Heart left ventricle (tissue), 16 donors: ENCODE measurements at regions of chr5 and their contacts with region 1.

Region 1: DNA sequence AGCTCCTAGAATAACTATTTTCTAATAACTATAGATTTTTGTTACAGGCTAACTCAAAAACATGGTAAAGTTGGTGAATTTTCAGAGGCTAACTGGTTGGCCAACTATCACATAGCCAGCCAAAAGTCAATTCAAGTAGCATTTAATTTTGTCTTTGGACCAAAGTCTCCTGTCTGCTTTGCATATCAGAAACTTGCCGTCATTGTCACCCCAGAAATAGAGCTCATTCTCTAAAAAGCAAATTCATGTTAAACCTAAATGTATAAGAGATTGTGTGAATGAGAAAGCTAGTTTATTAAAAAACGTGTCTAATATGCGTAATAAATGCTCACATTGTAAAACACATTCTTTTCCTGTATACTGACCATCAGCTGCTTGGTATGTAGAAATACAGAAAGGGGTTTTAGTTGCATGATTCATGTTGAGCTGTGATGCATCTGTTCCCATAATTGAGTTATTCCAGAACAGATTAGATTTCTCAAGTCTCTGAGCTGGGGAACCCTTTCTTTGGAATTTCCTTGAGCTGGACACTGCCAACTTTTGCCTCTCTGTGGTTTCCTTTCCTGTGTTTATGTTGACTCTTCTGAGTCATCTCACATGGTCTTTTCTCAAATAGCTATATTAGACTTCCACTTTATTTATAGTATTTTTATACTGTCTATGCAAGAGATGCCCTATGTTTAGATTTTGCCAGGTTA is 7.3 kb downstream of the SRFBP1 start:
- DNase-seq: no peak
- ATAC-seq: peak in 3 of 4 donors; percentile 64 to 96 (median 75)
- H3K4me3 ChIP-seq: no peak overlapping the region
- H3K27ac ChIP-seq: peak overlapping the region in 2 of 12 donors; percentile 35 to 79
- H3K4me1 ChIP-seq: peaks cover 0 to 34% (median 18%) of the 10 kb centered on the region in 12 donors
- H3K27me3 ChIP-seq: no peaks in the 10 kb centered on the region
- CTCF ChIP-seq: no peak
- POLR2A ChIP-seq: no peak

Region 2: DNA sequence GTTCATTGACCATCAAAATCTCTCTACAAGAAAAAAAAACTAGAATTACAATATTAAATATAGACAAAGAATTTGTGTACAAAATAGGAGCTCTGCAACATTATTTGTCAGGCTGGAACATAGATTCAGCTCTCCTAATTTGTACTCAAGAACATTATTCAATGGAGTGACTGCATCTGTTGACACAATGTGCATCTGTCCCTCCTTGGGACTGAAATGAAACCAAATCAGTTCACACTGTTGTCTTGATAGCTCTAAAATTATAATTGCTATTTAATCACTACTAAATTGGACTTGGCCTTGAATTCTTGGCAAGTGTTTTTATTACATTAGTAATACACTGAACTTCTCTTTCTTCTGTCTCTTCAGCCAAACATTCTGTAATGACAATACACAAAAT is 69.7 kb before region 1 on chr5:
- intact Hi-C with region 1: no loop called
- DNase-seq: no peak
- ATAC-seq: no peak
- H3K4me3 ChIP-seq: no peak overlapping the region
- H3K27ac ChIP-seq: no peak overlapping the region
- H3K4me1 ChIP-seq: no peaks in the 10 kb centered on the region
- H3K27me3 ChIP-seq: peaks cover 0 to 4% (median 0%) of the 10 kb centered on the region in 9 donors
- CTCF ChIP-seq: no peak
- POLR2A ChIP-seq: no peak

Region 3: GRCh38 chr5:122007546-122007945 is 38.5 kb after region 1 on chr5:
- intact Hi-C with region 1: no loop called
- DNase-seq: peak in 1 of 5 donors; percentile 37
- ATAC-seq: peak in 1 of 4 donors; percentile 31
- H3K4me3 ChIP-seq: no peak overlapping the region
- H3K27ac ChIP-seq: no peak overlapping the region
- H3K4me1 ChIP-seq: no peaks in the 10 kb centered on the region
- H3K27me3 ChIP-seq: no peaks in the 10 kb centered on the region
- CTCF ChIP-seq: no peak
- POLR2A ChIP-seq: no peak

Region 4: GRCh38 chr5:122076664-122077365 is 107.8 kb after region 1 on chr5:
- intact Hi-C with region 1: loop called in 6 of 10 experiments (anchors 2 to 10 kb)
- DNase-seq: peak; percentile 52 to 75 (median 73)
- ATAC-seq: peak; percentile 29 to 76 (median 74)
- H3K4me3 ChIP-seq: peak overlapping the region; percentile 24 to 71 (median 62)
- H3K27ac ChIP-seq: peak overlapping the region in 5 of 12 donors; percentile 7 to 60 (median 32)
- H3K4me1 ChIP-seq: peaks cover 0 to 25% (median 14%) of the 10 kb centered on the region in 12 donors
- H3K27me3 ChIP-seq: peaks cover 0 to 31% (median 0%) of the 10 kb centered on the region in 9 donors
- CTCF ChIP-seq: peak; percentile 41 to 74 (median 66)
- POLR2A ChIP-seq: no peak

Region 5: DNA sequence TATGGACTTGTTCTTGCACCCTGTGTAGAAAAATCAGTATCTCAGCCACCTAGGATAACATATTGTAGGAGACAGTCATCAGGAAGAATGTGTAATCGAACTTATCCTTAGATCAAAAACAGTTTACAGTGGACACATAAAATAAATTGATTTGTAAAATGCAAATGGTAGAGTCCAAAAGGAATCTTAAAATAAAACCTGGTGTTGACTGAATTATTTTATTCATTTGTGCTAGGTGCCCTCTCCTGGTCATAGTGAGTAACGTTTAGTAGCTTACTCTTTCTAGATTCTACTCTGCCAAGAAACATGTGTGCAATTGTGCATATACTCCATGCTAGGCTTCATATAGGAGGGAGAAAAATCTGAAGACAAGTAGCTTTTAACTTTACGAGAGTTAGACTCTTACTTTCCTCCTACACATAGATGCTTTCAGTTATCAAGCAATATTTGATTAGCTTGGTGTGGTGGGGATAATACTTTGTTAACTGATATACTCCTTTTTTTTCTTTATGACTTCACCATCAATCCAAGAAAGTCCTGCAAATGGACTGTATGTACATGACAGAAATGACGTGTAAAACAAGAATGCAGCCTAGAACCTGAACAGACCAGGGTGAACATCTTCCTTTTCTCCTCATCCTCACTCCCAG is 132.7 kb after region 1 on chr5:
- intact Hi-C with region 1: loop called in 3 of 10 experiments (anchors 2 to 5 kb)
- DNase-seq: no peak
- ATAC-seq: no peak
- H3K4me3 ChIP-seq: no peak overlapping the region
- H3K27ac ChIP-seq: no peak overlapping the region
- H3K4me1 ChIP-seq: no peaks in the 10 kb centered on the region
- H3K27me3 ChIP-seq: peaks cover 0 to 4% (median 0%) of the 10 kb centered on the region in 9 donors
- CTCF ChIP-seq: peak; percentile 31 to 67 (median 53)
- POLR2A ChIP-seq: no peak

Region 6: DNA sequence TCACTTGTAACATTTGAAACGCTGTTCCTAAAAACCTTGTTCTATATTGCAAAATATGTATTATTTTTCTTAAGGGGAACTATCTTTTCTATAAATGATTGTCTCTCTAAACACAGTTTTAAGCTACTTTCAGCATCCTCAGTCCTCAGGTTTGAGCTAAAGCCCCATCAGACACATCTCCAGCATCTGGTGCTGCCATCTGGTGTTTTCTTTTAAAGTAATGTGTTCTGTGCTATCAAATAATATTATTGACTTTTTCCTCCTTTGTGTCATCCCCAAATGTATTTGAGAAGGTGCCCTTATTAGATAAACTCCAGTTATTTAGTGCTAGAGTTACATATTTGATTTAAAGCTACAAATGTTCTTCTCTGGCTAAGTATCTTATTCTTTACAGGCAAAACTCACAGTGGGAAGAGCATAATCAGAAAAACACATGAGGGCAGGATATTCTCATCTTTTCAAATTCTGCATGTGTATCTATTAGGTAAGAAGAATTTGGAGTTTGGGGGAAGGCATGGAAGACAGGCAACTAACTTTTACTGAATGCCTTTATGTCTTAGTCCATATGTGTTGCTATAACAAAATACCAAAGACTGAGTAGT is 187.8 kb after region 1 on chr5:
- intact Hi-C with region 1: loop called in 1 of 10 experiments (anchors 10 kb)
- DNase-seq: no peak
- ATAC-seq: no peak
- H3K4me3 ChIP-seq: no peak overlapping the region
- H3K27ac ChIP-seq: no peak overlapping the region
- H3K4me1 ChIP-seq: peaks cover 0 to 15% (median 0%) of the 10 kb centered on the region in 12 donors
- H3K27me3 ChIP-seq: no peaks in the 10 kb centered on the region
- CTCF ChIP-seq: peak in 10 of 12 donors; percentile 4 to 40 (median 16)
- POLR2A ChIP-seq: no peak

Region 7: DNA sequence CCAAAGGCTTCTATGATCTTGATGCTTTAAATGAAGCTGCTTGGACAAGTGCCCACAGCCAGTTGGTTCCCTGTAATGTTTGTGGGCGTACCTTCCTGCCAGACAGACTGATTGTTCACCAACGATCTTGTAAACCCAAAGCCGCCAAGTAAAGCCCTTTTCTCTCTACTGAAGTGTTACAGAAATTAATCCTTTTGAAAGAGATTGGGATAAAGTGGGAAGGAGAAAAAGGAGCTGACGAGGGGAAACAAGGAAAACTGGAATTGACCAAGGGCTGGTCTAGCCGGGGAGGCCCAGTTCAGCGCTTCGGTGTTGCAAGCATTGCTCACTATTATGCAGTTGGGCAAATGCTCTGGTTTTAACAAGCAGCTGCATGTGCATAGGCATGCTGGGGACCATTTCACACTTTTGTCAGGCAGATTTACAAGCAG is 213.4 kb after region 1 on chr5:
- intact Hi-C with region 1: loop called in 2 of 10 experiments (anchors 10 kb)
- DNase-seq: peak in 4 of 5 donors; percentile 27 to 59 (median 42)
- ATAC-seq: peak in 3 of 4 donors; percentile 29 to 57 (median 55)
- H3K4me3 ChIP-seq: no peak overlapping the region
- H3K27ac ChIP-seq: peak overlapping the region; percentile 21 to 66 (median 52)
- H3K4me1 ChIP-seq: peaks cover 0 to 34% (median 20%) of the 10 kb centered on the region in 12 donors
- H3K27me3 ChIP-seq: no peaks in the 10 kb centered on the region
- CTCF ChIP-seq: no peak
- POLR2A ChIP-seq: no peak

Region 8: GRCh38 chr5:122377026-122377425 is 408.0 kb after region 1 on chr5:
- intact Hi-C with region 1: no loop called
- DNase-seq: no peak
- ATAC-seq: peak in 1 of 4 donors; percentile 34
- H3K4me3 ChIP-seq: no peak overlapping the region
- H3K27ac ChIP-seq: peak overlapping the region in 2 of 12 donors; percentile 30 to 50
- H3K4me1 ChIP-seq: peaks cover 0 to 8% (median 0%) of the 10 kb centered on the region in 12 donors
- H3K27me3 ChIP-seq: no peaks in the 10 kb centered on the region
- CTCF ChIP-seq: no peak
- POLR2A ChIP-seq: no peak